K562 (cell line): ENCODE measurements at regions of chr9 and their contacts with region 1.

Region 1: DNA sequence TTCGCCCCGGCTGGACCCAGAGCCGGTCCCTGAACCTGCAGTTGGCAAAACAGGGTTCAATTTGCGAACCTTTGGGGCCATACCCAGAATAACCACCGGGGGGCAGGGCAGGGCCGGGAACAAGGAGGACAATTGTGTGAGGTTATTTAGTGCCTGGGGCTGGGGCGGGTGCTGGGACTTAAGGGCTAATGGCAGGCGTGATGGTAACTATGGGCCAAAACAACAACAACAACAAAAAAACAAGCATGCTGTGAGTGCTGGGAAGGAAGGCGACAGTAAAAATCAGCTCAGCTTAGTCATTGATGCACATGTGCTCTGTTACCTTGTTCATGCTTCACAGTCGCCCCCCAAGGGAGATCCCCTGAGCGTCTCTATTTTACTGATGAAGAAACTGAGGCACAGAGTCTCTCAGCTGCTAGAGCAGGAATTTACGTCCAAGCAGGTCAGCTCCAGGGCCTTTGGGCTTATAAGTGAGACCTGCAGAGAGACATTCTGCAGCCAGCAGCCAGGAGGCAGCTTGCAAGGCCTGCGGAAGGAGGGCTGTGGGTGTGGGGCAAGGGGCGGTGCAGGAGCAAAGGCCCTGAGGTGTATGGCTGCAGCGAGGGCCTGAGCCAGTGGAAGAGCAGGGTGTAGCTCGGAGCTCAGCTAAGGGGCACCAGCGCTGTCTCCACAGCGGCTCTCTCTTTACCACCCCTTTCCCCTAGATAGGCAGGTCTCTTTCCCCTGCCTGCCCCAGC is 106.0 kb downstream of the PHF2 start:
- DNase-seq: peak; percentile 72 to 79 (median 78)
- ATAC-seq: peak; percentile 88
- H3K4me3 ChIP-seq: no peak overlapping the region
- H3K27ac ChIP-seq: no peak overlapping the region
- H3K4me1 ChIP-seq: peaks cover 0 to 18% of the 10 kb centered on the region in 2 experiments; a peak in 1 of 5 replicates
- H3K27me3 ChIP-seq: no peaks in the 10 kb centered on the region
- CTCF ChIP-seq: peak; percentile 84 to 88 (median 86)
- EP300 ChIP-seq: no peak
- POLR2A ChIP-seq: no peak
- RAD21 ChIP-seq: peak; percentile 83 to 89

Region 2: DNA sequence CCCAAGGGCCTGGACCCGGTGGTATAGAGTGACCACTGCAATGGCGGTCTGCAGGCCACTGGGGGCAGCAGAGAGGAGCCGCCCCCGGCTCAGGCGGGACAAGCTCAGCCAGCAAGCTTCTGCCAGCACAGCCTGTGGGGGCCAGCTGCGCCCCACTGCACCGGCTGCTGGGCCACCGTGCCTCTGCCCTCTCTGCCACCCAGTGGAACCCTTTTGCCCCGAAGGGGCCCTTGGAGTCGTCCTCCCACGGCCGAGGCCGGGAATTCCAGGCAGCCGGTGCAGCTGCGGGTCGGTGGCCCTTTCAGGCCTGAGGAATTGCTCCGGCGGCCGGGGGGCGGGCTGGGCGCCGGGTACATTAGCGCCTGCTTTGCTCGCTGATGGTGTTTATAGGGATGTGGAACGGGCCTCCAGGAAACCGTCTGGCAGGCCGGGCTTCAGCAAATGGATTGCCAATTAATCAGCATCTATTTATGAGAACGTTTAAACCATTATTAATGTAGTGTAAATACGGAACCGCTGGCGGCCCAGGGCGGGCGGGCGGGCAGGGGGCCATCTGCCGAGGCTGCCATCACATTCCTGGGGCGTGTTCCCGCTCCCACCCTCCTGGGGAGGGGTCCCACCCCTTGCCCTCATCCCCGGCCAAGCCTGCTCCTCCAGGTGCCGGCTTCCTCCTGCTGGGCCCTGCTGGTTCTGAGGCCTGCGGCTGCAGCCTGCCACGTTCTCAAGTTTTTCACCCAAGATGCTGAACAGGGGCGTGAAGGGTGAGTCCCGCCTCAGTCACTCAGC is 145.3 kb after region 1 on chr9:
- CTCF ChIA-PET with region 1: no interaction called
- POLR2A ChIA-PET with region 1: no interaction called
- in situ Hi-C with region 1: no loop called
- intact Hi-C with region 1: loop called (anchors 10 kb)
- DNase-seq: peak; percentile 73 to 89 (median 87)
- ATAC-seq: peak; percentile 99
- H3K4me3 ChIP-seq: no peak overlapping the region
- H3K27ac ChIP-seq: no peak overlapping the region
- H3K4me1 ChIP-seq: peaks cover 0 to 20% of the 10 kb centered on the region in 2 experiments; a peak in 2 of 5 replicates
- H3K27me3 ChIP-seq: peaks cover 0 to 12% of the 10 kb centered on the region in 2 experiments; a peak in 3 of 5 replicates
- CTCF ChIP-seq: peak; percentile 80 to 88 (median 85)
- EP300 ChIP-seq: no peak
- POLR2A ChIP-seq: no peak
- RAD21 ChIP-seq: peak in 1 of 2 experiments; percentile 45; a peak in 2 of 4 replicates

Region 3: GRCh38 chr9:93908591-93909511 is 226.5 kb after region 1 on chr9:
- CTCF ChIA-PET with region 1: no interaction called
- POLR2A ChIA-PET with region 1: no interaction called
- in situ Hi-C with region 1: no loop called
- intact Hi-C with region 1: loop called (anchors 5 kb)
- DNase-seq: peak in 1 of 4 experiments; percentile 28
- ATAC-seq: peak; percentile 79
- H3K4me3 ChIP-seq: no peak overlapping the region
- H3K27ac ChIP-seq: no peak overlapping the region
- H3K4me1 ChIP-seq: peaks cover 0 to 8% of the 10 kb centered on the region in 2 experiments; a peak in 1 of 5 replicates
- H3K27me3 ChIP-seq: peaks cover 19 to 65% of the 10 kb centered on the region in 2 experiments; a peak in 4 of 5 replicates
- CTCF ChIP-seq: peak; percentile 50 to 63 (median 59)
- EP300 ChIP-seq: no peak
- POLR2A ChIP-seq: no peak
- RAD21 ChIP-seq: peak; percentile 25 to 53; a peak in 2 of 4 replicates

Region 4: GRCh38 chr9:93962561-93963440 is 280.4 kb after region 1 on chr9:
- CTCF ChIA-PET with region 1: interaction called, 28 read pairs
- POLR2A ChIA-PET with region 1: no interaction called
- in situ Hi-C with region 1: no loop called
- intact Hi-C with region 1: loop called (anchors 1 kb)
- DNase-seq: peak; percentile 88 to 91 (median 90)
- ATAC-seq: peak; percentile 93
- H3K4me3 ChIP-seq: no peak overlapping the region
- H3K27ac ChIP-seq: no peak overlapping the region
- H3K4me1 ChIP-seq: peaks cover 5 to 27% of the 10 kb centered on the region in 2 experiments; a peak in 4 of 5 replicates
- H3K27me3 ChIP-seq: peaks cover 19 to 47% of the 10 kb centered on the region in 2 experiments; a peak in 4 of 5 replicates
- CTCF ChIP-seq: peak; percentile 84 to 90 (median 85)
- EP300 ChIP-seq: peak; percentile 48
- POLR2A ChIP-seq: no peak
- RAD21 ChIP-seq: peak; percentile 69 to 90

Region 5: GRCh38 chr9:94002316-94003140 is 320.1 kb after region 1 on chr9:
- CTCF ChIA-PET with region 1: interaction called, 20 read pairs
- POLR2A ChIA-PET with region 1: no interaction called
- in situ Hi-C with region 1: no loop called
- intact Hi-C with region 1: loop called (anchors 1 kb)
- DNase-seq: peak; percentile 46 to 75 (median 58)
- ATAC-seq: peak; percentile 88
- H3K4me3 ChIP-seq: no peak overlapping the region
- H3K27ac ChIP-seq: no peak overlapping the region
- H3K4me1 ChIP-seq: no peaks in the 10 kb centered on the region
- H3K27me3 ChIP-seq: peaks cover 0 to 4% of the 10 kb centered on the region in 2 experiments; a peak in 1 of 5 replicates
- CTCF ChIP-seq: peak; percentile 77 to 89 (median 80)
- EP300 ChIP-seq: no peak
- POLR2A ChIP-seq: no peak
- RAD21 ChIP-seq: peak; percentile 43 to 79